Activated CD8-positive, alpha-beta T cell treated with anti-CD3 and anti-CD28 coated beads, Interleukin-2, amount 10 ng/mL, durations not matched to agents 7 days and 5 days (primary cell): ENCODE measurements at regions of chr2 and their contacts with region 1.

Region 1: DNA sequence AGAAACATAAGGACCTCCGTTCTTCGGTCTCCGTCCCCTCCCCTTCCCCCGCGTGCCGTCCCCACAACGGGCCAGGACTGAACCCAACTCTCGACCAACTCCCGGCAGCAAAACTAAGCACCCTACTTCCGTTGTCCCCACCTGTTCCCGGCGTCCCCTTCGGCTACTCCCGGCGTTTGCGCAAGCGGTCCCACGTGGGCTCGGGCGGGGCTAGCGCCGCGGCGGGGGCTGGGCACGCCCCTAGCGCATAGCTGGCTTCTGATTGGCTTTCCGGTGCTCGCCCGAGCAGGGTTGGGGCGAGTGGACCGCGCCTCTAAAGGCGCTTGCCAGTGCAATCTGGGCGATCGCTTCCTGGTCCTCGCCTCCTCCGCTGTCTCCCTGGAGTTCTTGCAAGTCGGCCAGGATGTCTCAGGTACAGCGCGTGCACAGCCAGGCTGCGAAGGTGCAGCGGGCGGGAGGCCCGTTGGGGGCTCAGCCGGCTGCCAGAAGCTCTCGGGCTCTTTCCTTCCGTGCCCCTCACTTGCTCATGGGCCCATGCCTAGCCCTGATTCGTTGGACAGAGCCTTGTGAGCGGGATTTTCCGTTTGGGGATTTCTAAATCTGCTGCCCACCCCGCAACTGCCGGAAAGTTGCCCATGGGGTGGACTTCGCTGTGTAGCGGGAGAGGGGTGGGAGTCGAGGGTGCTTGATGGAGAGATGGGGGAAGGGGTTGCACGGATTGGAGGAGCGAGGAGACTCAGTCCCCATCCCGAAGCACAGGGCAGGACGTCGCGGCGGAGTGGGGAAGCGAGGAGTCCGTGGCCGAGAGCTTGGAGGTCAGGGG is at the starts of genes C2orf76 and DBI:
- DNase-seq: peak; percentile 95
- ATAC-seq: peak; percentile 94
- H3K4me3 Mint-ChIP-seq: peak within 1 kb of the TSS; percentile 99
- H3K27ac Mint-ChIP-seq: peak within 1 kb of the TSS; percentile 98
- H3K4me1 Mint-ChIP-seq: peaks cover 36% of the 10 kb centered on the region
- H3K27me3 Mint-ChIP-seq: no peaks in the 10 kb centered on the region
- total RNA-seq, gene C2orf76: 5.8 to 6.6 TPM
- total RNA-seq, gene DBI: 192 TPM

Region 2: DNA sequence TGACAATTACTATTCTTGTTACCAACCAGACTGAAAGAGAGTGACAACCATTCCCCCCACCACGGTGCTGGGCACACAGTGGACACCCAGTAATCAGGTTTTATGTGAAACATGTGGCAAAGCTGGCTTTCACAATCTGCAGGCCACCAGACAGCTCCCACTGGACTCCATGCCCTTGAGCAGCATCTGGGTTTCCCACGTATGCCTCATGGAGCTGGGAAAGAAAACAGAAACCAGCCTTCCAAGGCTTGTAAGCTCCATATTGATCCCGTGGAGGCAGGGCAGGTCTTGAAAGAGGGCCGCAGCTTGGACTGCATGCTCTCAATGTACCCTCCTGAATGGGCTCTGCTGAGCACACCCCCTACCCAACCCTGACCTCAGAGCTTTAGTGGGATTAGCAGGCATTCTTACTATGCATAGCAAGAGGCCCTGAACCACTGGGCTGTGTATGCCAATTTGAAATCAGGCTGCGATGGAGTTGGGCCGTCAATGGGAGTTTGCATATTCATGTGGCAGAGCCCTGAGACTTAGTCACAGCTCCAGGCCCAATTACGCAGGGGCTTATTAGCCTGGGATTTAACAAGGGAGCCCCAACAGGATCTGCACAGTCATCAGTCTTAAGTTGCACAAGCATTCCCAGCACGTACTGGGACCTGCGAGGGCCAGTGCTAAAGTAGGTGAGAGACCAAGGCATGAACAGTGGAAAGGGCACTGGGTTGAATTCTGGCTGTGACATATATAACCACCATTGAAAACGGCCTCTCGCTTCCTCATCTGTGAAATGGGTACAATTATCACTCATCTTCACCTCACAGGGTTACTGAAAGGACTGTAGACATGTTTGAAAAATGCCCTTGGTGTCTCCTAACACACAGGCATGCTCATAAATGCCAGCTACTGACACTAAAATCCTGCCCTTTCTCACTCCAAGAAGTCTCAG is 218.8 kb before region 1 on chr2:
- CTCF ChIA-PET with region 1: no interaction called
- POLR2A ChIA-PET with region 1: no interaction called
- DNase-seq: no peak
- ATAC-seq: no peak
- H3K4me3 Mint-ChIP-seq: no peak overlapping the region
- H3K27ac Mint-ChIP-seq: no peak overlapping the region
- H3K4me1 Mint-ChIP-seq: no peaks in the 10 kb centered on the region
- H3K27me3 Mint-ChIP-seq: peaks cover 3% of the 10 kb centered on the region

Region 3: DNA sequence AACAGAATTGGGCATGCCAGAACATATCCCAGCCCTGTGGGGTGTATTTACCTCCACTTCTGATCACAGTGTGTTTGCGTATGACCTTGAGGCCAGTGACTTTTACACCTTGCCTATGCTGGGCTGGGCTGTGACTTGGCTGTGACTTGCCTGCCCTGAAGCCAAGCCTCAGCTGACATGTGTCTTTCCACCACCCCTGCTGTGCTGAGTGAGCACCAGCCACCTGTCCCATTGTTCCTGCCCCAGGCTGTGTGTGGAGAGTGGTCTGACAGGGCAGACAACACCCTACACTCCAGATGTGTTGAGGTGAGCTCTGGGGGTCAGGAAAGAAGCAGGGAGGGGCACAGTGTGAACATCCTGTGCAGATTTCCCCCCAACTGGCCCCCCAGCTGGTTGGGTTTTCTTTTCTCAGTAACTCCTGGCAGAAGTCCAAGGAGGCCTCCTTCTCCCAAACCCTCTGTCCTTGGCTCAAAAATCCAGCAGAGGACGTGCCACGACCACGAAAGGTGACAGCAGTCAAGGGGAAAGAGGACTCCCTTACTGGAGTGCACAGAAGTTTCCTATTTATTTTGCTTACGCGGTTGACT is 148.3 kb before region 1 on chr2:
- CTCF ChIA-PET with region 1: no interaction called
- POLR2A ChIA-PET with region 1: no interaction called
- DNase-seq: no peak
- ATAC-seq: no peak
- H3K4me3 Mint-ChIP-seq: no peak overlapping the region
- H3K27ac Mint-ChIP-seq: peak overlapping the region; percentile 20
- H3K4me1 Mint-ChIP-seq: no peaks in the 10 kb centered on the region
- H3K27me3 Mint-ChIP-seq: peaks cover 25% of the 10 kb centered on the region

Region 4: GRCh38 chr2:119338826-119339561 is 27.9 kb before region 1 on chr2:
- CTCF ChIA-PET with region 1: interaction called, 3 read pairs
- POLR2A ChIA-PET with region 1: interaction called, 14 read pairs
- DNase-seq: peak; percentile 79
- ATAC-seq: peak; percentile 99
- H3K4me3 Mint-ChIP-seq: peak overlapping the region; percentile 57
- H3K27ac Mint-ChIP-seq: peak overlapping the region; percentile 90
- H3K4me1 Mint-ChIP-seq: peaks cover 22% of the 10 kb centered on the region
- H3K27me3 Mint-ChIP-seq: no peaks in the 10 kb centered on the region

Region 5: DNA sequence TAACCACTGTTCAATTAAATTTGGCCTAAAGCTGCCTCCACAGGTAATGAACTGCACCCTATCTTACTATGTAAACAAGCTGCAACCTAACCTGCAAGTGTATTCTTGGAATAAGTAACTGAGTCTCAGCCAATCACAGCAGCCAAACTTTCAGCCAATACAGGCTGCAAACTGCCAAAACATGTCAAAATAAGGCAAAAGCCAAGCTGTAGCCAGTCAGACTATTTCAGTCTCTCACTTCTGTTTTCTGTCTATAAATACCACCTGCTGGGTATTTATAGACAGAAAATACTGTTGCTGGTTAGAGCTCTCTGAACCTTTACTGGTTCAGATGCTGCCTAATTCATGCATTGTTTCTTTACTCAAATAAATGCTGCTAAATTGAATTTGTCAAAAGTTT is 14.5 kb before region 1 on chr2:
- CTCF ChIA-PET with region 1: interaction called, 3 read pairs
- POLR2A ChIA-PET with region 1: interaction called, 22 read pairs
- DNase-seq: no peak
- ATAC-seq: no peak
- H3K4me3 Mint-ChIP-seq: no peak overlapping the region
- H3K27ac Mint-ChIP-seq: no peak overlapping the region
- H3K4me1 Mint-ChIP-seq: peaks cover 7% of the 10 kb centered on the region
- H3K27me3 Mint-ChIP-seq: no peaks in the 10 kb centered on the region

Region 6: DNA sequence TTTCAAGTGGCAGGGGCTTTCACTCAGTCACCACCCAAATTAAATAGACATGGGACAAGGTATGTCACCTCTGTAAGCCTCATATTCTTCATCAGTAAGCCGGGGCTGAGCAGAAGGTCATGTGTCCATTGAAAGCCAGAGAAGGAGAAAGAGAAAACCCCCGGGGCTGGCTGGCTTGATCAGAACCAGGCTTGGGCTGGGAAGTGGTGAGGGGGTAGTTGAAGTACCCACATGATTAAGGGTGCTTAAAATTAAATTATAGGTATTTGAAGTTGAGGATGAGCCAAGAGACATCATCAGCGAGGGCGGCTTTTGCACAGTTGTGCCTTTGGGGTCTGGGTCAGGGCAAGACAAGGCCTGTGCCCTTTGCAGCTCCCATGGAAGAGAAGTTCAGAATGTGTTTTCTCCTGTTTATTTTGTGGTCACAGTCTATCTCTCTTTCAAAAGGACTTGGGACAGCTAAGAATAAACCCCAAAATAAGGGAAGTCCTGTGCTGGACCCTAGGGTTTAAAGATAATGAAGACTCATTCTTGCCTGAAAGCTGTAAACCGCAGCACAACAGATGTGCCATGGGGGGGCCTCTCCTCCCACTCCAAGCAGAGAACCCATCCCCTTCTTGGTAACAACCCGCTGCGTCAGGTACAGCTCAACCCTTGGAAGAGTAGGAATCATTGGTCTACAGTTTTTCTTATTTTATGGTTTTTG is 10.6 kb after region 1 on chr2:
- CTCF ChIA-PET with region 1: interaction called, 4 read pairs
- POLR2A ChIA-PET with region 1: interaction called, 10 read pairs
- DNase-seq: no peak
- ATAC-seq: peak; percentile 33
- H3K4me3 Mint-ChIP-seq: no peak overlapping the region
- H3K27ac Mint-ChIP-seq: no peak overlapping the region
- H3K4me1 Mint-ChIP-seq: no peaks in the 10 kb centered on the region
- H3K27me3 Mint-ChIP-seq: peaks cover 8% of the 10 kb centered on the region